RWPE1 (cell line): ENCODE measurements at regions of chr9 and their contacts with region 1.

Region 1: DNA sequence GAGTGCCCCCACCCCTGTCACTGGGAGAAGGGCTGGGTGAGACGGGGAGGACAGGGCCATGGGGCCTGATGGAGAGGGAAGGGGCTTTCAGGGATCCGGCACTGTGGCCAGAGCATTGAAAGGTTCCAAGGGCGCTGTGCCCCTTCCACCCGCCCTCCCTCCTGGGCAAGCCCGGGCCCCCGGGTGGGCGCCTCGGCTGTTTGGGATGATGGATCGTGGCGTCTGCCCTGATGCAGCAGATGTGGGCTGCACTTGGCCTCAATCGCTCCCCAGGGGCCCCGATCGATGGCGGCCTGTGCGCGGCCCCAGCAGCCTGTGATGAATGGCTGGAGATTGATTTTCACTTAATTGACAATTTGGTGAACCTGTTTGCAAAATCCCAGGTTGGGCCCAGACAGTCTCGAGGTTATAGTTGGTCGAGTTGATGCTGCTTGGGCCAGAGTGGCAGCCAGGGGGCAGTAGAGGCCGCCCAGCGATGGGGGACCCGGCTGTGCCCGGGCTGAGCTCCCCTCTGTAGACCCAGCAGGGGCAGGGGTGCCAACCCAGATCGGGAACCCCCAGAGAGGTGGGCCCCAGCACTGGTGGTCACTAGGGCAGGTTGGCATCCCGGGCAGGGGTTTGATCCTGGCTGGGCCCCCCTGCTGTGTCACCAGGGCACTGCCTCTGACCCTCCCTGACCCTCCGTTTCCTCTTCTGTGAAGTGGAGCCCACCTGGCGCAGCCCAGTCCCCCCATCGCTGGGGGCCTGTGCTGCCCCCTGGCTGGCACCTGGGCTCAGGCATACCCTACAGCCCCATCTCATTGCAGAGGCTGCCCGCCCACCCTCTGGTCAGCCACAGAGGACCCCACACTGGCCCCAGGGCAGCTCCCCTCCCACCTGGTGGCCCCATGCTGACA is 34.7 kb downstream of the LHX3 start:
- DNase-seq: peak; percentile 59
- H3K27ac ChIP-seq: no peak overlapping the region
- CTCF ChIP-seq: peak; percentile 88

Region 2: GRCh38 chr9:136267261-136268111 is 97.2 kb after region 1 on chr9:
- CTCF ChIA-PET with region 1: interaction called, 13 read pairs
- POLR2A ChIA-PET with region 1: no interaction called
- DNase-seq: peak; percentile 99
- H3K27ac ChIP-seq: peak overlapping the region; percentile 46
- CTCF ChIP-seq: no peak; the same call in 1 of the 2 replicates